B cell (primary cell): ENCODE measurements at regions of chr19 and their contacts with region 1.

Region 1: DNA sequence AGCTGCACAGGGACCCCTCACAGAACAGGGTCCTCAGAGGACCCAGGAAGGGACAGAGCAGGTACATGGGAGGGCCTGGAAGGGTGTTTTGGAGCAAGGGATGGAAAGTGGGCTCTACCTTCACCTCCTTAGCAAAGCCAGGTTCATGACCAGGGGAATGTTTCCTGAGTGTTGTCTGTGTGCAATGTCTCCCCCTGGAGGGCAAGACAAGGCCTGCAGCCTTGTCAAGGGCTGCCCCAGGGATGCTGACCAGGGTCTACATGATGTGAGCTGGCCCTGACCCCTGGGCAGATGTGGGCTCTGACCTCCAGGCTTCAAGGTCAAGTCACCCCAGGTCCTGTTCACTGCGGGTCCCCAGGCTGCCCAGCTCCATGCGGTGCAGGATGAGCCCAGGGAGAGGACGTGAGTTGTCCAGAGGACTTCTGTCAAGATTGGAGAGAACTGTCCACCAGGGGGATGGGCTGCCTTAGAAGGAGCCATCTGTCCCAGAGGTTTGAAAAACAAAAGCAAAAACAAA is 1.0 kb upstream of the CEACAM1 start:
- DNase-seq: peak; percentile 85
- ATAC-seq: peak; percentile 80
- H3K4me3 ChIP-seq: peak overlapping the region in 3 of 5 experiments; percentile 48 to 74 (median 56)
- H3K4me3 Mint-ChIP-seq: peak overlapping the region; percentile 87
- H3K27ac ChIP-seq: peak overlapping the region; percentile 45 to 67
- H3K27ac Mint-ChIP-seq: peak overlapping the region; percentile 88
- H3K4me1 ChIP-seq: peaks cover 22 to 25% of the 10 kb centered on the region in 2 donors
- H3K4me1 Mint-ChIP-seq: peaks cover 35% of the 10 kb centered on the region
- H3K27me3 ChIP-seq: no peaks in the 10 kb centered on the region
- H3K27me3 Mint-ChIP-seq: no peaks in the 10 kb centered on the region
- CTCF ChIP-seq: peak; percentile 97

Region 2: DNA sequence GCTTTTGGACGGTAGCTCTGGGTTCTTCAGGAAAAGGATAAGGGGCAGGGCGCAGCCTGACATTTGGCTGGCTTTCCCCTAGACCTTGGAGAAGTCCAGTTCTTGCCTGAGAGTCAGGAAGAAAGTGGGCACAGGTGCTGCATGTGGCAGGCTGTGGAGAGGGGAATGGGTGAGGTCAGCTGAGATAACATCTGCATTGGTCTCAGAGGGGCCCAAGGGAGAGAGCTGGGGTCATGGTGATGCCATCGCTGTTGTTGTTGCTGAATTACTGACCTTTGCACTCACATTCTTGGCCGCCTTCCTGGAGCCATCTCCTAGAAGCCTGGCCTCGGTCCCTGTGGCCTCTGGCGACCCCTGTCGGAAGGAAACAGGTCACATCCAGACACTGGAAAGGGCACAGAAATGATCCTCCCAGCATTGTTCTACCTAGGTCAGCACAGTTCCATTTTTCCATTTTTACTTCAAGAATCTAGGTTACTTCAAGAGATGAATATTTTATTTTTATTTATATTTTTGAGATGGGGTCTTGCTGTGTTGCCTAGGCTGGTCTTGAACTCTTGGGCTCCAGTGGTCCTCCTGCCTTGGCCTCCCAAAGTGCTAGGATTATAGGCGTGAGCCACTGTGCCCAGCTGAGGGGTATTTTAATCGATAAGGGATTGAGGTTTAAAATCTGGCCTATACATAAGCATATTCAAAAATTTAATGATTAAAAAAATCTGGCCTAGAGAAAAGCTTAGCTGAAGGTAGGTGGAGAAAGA is 95.6 kb before region 1 on chr19:
- CTCF ChIA-PET with region 1: interaction called, 35 read pairs
- POLR2A ChIA-PET with region 1: no interaction called
- intact Hi-C with region 1: no loop called
- DNase-seq: peak; percentile 65
- ATAC-seq: peak; percentile 75
- H3K4me3 ChIP-seq: no peak overlapping the region
- H3K4me3 Mint-ChIP-seq: no peak overlapping the region
- H3K27ac ChIP-seq: no peak overlapping the region
- H3K27ac Mint-ChIP-seq: no peak overlapping the region
- H3K4me1 ChIP-seq: peaks cover 0 to 4% of the 10 kb centered on the region in 2 donors
- H3K4me1 Mint-ChIP-seq: peaks cover 6% of the 10 kb centered on the region
- H3K27me3 ChIP-seq: peaks cover 0 to under 1% (median 0%) of the 10 kb centered on the region in 4 experiments
- H3K27me3 Mint-ChIP-seq: no peaks in the 10 kb centered on the region
- CTCF ChIP-seq: peak; percentile 81

Region 3: GRCh38 chr19:42440357-42441048 is 88.8 kb before region 1 on chr19:
- CTCF ChIA-PET with region 1: interaction called, 61 read pairs
- POLR2A ChIA-PET with region 1: no interaction called
- intact Hi-C with region 1: no loop called
- DNase-seq: peak; percentile 83
- ATAC-seq: peak; percentile 57
- H3K4me3 ChIP-seq: no peak overlapping the region
- H3K4me3 Mint-ChIP-seq: no peak overlapping the region
- H3K27ac ChIP-seq: no peak overlapping the region
- H3K27ac Mint-ChIP-seq: no peak overlapping the region
- H3K4me1 ChIP-seq: peaks cover 0 to 7% of the 10 kb centered on the region in 2 donors
- H3K4me1 Mint-ChIP-seq: peaks cover 8% of the 10 kb centered on the region
- H3K27me3 ChIP-seq: peaks cover 0 to 5% (median 0%) of the 10 kb centered on the region in 4 experiments
- H3K27me3 Mint-ChIP-seq: peaks cover 16% of the 10 kb centered on the region
- CTCF ChIP-seq: peak; percentile 96

Region 4: GRCh38 chr19:42468273-42468796 is 61.0 kb before region 1 on chr19:
- CTCF ChIA-PET with region 1: interaction called, 169 read pairs
- POLR2A ChIA-PET with region 1: interaction called, 10 read pairs
- intact Hi-C with region 1: loop called (anchors 1 kb)
- DNase-seq: no peak
- ATAC-seq: no peak
- H3K4me3 ChIP-seq: no peak overlapping the region
- H3K4me3 Mint-ChIP-seq: no peak overlapping the region
- H3K27ac ChIP-seq: no peak overlapping the region
- H3K27ac Mint-ChIP-seq: no peak overlapping the region
- H3K4me1 ChIP-seq: peaks cover 38 to 48% of the 10 kb centered on the region in 2 donors
- H3K4me1 Mint-ChIP-seq: peaks cover 47% of the 10 kb centered on the region
- H3K27me3 ChIP-seq: no peaks in the 10 kb centered on the region
- H3K27me3 Mint-ChIP-seq: no peaks in the 10 kb centered on the region
- CTCF ChIP-seq: no peak

Region 5: GRCh38 chr19:42497492-42498168 is 31.7 kb before region 1 on chr19:
- CTCF ChIA-PET with region 1: interaction called, 27 read pairs
- POLR2A ChIA-PET with region 1: no interaction called
- intact Hi-C with region 1: no loop called
- DNase-seq: peak; percentile 68
- ATAC-seq: peak; percentile 73
- H3K4me3 ChIP-seq: peak overlapping the region in 1 of 5 experiments; percentile 18
- H3K4me3 Mint-ChIP-seq: peak overlapping the region; percentile 40
- H3K27ac ChIP-seq: peak overlapping the region; percentile 56 to 77
- H3K27ac Mint-ChIP-seq: peak overlapping the region; percentile 93
- H3K4me1 ChIP-seq: peaks cover 27% of the 10 kb centered on the region in 2 donors
- H3K4me1 Mint-ChIP-seq: peaks cover 30% of the 10 kb centered on the region
- H3K27me3 ChIP-seq: no peaks in the 10 kb centered on the region
- H3K27me3 Mint-ChIP-seq: no peaks in the 10 kb centered on the region
- CTCF ChIP-seq: no peak

Region 6: GRCh38 chr19:42519108-42519507 is 10.2 kb before region 1 on chr19:
- CTCF ChIA-PET with region 1: interaction called, 15 read pairs
- POLR2A ChIA-PET with region 1: no interaction called
- intact Hi-C with region 1: no loop called
- DNase-seq: no peak
- ATAC-seq: no peak
- H3K4me3 ChIP-seq: no peak overlapping the region
- H3K4me3 Mint-ChIP-seq: no peak overlapping the region
- H3K27ac ChIP-seq: no peak overlapping the region
- H3K27ac Mint-ChIP-seq: no peak overlapping the region
- H3K4me1 ChIP-seq: peaks cover 6 to 10% of the 10 kb centered on the region in 2 donors
- H3K4me1 Mint-ChIP-seq: peaks cover 13% of the 10 kb centered on the region
- H3K27me3 ChIP-seq: no peaks in the 10 kb centered on the region
- H3K27me3 Mint-ChIP-seq: no peaks in the 10 kb centered on the region
- CTCF ChIP-seq: no peak